ENCODE measurements at regions of chr18 and their contacts with region 1.

Region 1: DNA sequence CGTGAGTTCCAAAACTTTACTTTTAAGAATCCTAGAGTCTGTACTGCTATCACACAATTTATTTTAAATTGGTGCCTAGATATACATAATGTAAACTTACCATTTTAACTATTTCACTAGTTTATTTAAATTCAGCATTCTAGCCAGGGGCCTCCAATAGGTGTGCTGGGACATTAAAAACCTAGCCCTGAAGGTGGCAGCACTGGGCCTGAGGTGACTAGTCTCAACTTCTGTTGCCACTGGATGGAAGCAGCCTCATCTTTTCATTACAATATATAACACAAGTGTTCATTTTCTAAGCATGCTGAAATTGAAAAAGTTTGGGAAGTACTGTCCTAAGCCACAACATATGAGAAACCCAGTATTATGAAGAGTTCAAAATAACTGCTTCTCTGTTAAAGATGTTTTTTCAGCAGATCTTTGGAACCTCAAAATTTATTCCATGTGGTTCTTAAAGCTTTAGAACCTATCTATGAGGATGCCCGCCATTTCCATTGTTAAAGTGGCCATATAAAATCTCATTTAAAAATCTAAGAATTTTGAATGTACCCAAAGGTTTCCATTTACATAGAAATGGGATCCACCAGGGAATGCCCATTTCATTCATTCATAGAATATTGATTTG is 2.9 kb upstream of the RBBP8 start:
- DNase-seq: peak; percentile 49 to 82 (median 64)
- H3K4me3 ChIP-seq: no peak overlapping the region
- H3K4me3 Mint-ChIP-seq: peak overlapping the region in 1 of 7 donors; percentile 73
- H3K27ac ChIP-seq: no peak overlapping the region
- H3K27ac Mint-ChIP-seq: no peak overlapping the region
- H3K4me1 ChIP-seq: peaks cover 8% of the 10 kb centered on the region
- H3K4me1 Mint-ChIP-seq: peaks cover 10 to 21% (median 14%) of the 10 kb centered on the region in 3 donors
- H3K27me3 ChIP-seq: no peaks in the 10 kb centered on the region
- H3K27me3 Mint-ChIP-seq: peaks cover 0 to 3% of the 10 kb centered on the region in 2 donors

Region 2: GRCh38 chr18:23412351-23412964 is 482.3 kb after region 1 on chr18:
- CTCF ChIA-PET with region 1: interaction called, 14 read pairs
- POLR2A ChIA-PET with region 1: no interaction called
- DNase-seq: no peak
- H3K4me3 ChIP-seq: no peak overlapping the region
- H3K4me3 Mint-ChIP-seq: no peak overlapping the region
- H3K27ac ChIP-seq: no peak overlapping the region
- H3K27ac Mint-ChIP-seq: peak overlapping the region in 1 of 8 donors; percentile 66
- H3K4me1 ChIP-seq: no peaks in the 10 kb centered on the region
- H3K4me1 Mint-ChIP-seq: peaks cover 0 to 5% (median 2%) of the 10 kb centered on the region in 3 donors
- H3K27me3 ChIP-seq: no peaks in the 10 kb centered on the region
- H3K27me3 Mint-ChIP-seq: no peaks in the 10 kb centered on the region